ENCODE measurements at regions of chr12 and their contacts with region 1.

Region 1: DNA sequence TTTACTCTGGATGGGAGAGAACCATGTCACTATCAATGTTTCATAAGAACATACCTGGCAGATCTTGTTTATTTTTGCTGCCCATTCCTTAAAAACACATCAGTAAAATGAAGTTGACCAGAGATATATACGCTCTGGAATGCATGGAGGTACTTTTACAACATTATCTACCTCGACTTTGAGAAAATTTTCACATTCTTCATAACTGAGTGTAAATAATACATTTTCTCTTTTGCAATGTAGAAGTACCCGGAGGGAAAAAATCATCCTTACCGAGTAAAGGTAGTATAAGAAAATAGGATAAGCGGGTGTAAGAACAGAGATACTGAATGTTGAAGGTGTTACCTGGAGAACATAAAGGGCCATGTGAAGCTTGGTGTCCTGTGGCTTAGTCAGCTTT is 80.7 kb downstream of the TMEM116 start:
- DNase-seq: no peak
- H3K4me3 ChIP-seq: no peak overlapping the region
- H3K27ac ChIP-seq: no peak overlapping the region
- H3K4me1 ChIP-seq: no peaks in the 10 kb centered on the region
- H3K27me3 ChIP-seq: no peaks in the 10 kb centered on the region
- CTCF ChIP-seq: no peak

Region 2: DNA sequence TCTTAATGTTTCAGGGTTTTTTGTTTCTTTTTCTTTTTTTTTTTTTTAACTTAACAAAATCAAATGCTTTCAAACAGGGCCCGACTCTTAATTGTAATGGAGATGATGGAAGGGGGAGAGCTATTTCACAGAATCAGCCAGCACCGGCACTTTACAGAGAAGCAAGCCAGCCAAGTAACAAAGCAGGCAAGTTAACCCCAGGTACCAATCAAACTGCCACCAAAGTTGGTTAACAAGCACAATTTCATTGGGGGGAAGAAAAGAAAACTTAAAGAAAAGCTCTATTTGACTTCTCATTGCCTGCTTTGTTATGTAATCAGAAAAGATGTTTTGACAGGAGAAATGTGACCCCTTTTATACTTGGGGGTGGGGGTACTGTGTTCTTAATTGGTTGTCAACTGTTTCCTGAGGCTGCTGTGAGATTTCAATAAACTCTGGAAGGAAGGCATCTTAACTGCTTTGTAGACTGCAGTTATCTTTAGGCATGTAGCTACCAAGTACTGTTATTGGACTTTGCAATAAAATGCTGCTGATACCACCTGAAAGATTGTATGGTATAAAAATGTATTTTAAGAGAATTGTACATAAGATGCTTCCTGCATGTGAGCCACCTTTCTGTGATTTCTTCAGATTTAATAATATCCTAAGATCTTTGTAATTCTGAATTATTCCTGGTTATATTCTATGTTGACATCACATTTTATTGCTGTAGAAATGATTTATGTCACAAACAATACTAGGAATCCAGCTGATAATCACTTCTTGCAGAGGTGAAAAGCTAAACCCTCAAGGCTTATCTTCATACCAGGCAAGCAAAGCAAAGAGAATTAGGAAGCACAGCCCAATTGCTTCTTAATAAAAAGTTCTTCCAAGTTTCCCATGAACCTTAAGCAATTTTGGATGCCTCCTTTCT is 63.3 kb before region 1 on chr12:
- intact Hi-C with region 1: loop called (anchors 5 kb)
- DNase-seq: no peak
- H3K4me3 ChIP-seq: no peak overlapping the region
- H3K27ac ChIP-seq: no peak overlapping the region
- H3K4me1 ChIP-seq: no peaks in the 10 kb centered on the region
- H3K27me3 ChIP-seq: no peaks in the 10 kb centered on the region
- CTCF ChIP-seq: no peak

Region 3: GRCh38 chr12:112096667-112097066 is 164.4 kb after region 1 on chr12:
- intact Hi-C with region 1: no loop called
- DNase-seq: no peak
- H3K4me3 ChIP-seq: no peak overlapping the region
- H3K27ac ChIP-seq: no peak overlapping the region
- H3K4me1 ChIP-seq: no peaks in the 10 kb centered on the region
- H3K27me3 ChIP-seq: no peaks in the 10 kb centered on the region
- CTCF ChIP-seq: no peak